PC-9 (cell line): ENCODE measurements at regions of chr13 and their contacts with region 1.

Region 1: GRCh38 chr13:51444922-51445321 is 7.9 kb downstream of the INTS6 start:
- DNase-seq: no peak
- H3K4me3 ChIP-seq: no peak overlapping the region
- H3K27ac ChIP-seq: no peak overlapping the region
- H3K4me1 ChIP-seq: no peaks in the 10 kb centered on the region
- H3K27me3 ChIP-seq: no peaks in the 10 kb centered on the region
- CTCF ChIP-seq: peak; percentile 47; the same call in 1 of the 2 replicates

Region 2: GRCh38 chr13:51380269-51380668 is 64.7 kb before region 1 on chr13:
- CTCF ChIA-PET with region 1: no interaction called
- POLR2A ChIA-PET with region 1: no interaction called
- intact Hi-C with region 1: no loop called
- DNase-seq: peak in 1 of 2 experiments; percentile 38
- H3K4me3 ChIP-seq: no peak overlapping the region
- H3K27ac ChIP-seq: no peak overlapping the region
- H3K4me1 ChIP-seq: no peaks in the 10 kb centered on the region
- H3K27me3 ChIP-seq: no peaks in the 10 kb centered on the region
- CTCF ChIP-seq: no peak

Region 3: GRCh38 chr13:51425410-51426042 is 19.4 kb before region 1 on chr13:
- CTCF ChIA-PET with region 1: no interaction called
- POLR2A ChIA-PET with region 1: interaction called, 19 read pairs
- intact Hi-C with region 1: no loop called
- DNase-seq: no peak
- H3K4me3 ChIP-seq: no peak overlapping the region
- H3K27ac ChIP-seq: no peak overlapping the region
- H3K4me1 ChIP-seq: peaks cover 6% of the 10 kb centered on the region
- H3K27me3 ChIP-seq: no peaks in the 10 kb centered on the region
- CTCF ChIP-seq: no peak

Region 4: DNA sequence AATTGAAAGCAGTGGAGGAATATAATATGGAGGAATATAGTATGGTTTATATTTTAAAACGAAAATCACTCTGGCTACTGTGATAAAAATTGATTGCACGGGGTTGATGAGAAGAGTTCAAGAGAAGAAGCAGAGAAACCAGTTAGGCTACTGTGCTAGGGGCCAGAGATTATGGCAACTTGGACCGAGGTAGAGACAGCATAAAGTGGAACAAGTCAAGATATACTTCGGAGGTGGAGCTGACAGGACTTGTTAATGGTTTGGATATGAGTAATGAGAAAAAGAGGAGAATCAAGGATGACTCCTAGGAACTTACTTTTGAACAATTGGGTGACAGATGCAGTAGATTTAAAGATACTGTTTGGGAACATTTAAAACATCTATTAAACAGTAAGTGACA is 132.8 kb after region 1 on chr13:
- CTCF ChIA-PET with region 1: no interaction called
- POLR2A ChIA-PET with region 1: interaction called, 18 read pairs
- intact Hi-C with region 1: no loop called
- DNase-seq: no peak
- H3K4me3 ChIP-seq: no peak overlapping the region
- H3K27ac ChIP-seq: no peak overlapping the region
- H3K4me1 ChIP-seq: no peaks in the 10 kb centered on the region
- H3K27me3 ChIP-seq: no peaks in the 10 kb centered on the region
- CTCF ChIP-seq: no peak